HCT116 (cell line): ENCODE measurements at regions of chr4 and their contacts with region 1.

Region 1: DNA sequence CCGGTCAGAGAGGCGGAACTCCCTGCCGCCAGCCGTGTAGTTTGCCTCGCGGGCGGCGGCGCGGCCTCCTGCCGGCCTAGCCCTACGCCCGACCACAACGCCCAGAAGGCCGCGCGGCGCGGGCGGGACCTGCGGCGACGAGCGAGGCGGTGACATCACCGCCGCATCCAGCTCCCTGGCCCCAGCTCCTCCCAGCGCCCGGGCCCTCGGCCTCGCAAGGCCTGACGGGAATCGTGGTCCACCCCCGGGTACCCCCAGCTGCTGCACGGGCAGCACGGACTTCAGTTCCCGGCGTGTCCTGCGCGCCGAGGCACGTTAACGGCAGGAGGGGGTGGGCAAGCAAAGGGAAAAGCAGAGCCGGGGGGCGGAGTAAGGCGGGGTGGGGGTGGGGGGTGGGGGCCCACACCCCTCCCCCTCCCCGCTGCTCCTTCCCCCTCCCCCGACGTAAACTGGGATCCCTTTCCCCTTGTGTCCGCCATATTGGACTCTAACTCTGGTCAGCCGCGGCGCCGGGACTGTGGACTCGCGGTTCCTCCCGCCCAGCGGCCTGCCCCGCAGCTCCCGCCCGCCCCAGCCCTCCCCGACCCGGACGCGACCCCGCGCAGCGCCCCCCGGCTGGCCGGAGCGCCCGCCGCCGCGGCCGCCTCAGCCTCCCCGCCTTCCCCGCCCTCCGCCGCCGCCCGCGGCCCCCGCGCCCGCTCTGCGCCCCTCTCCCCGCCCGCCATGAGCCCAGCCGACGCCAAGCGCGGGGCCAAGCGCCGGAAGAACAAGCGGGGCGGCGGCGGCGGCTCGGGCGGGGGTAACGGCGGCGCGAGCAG is at the start of gene FAM193A:
- DNase-seq: peak; percentile 99
- ATAC-seq: peak; percentile 94
- H3K4me3 ChIP-seq: peak within 1 kb of the TSS; percentile 77 to 87
- H3K27ac ChIP-seq: peak within 1 kb of the TSS; percentile 97
- H3K4me1 ChIP-seq: peaks cover 8 to 26% of the 10 kb centered on the region in 2 experiments; a peak in 3 of 4 replicates
- H3K27me3 ChIP-seq: no peaks in the 10 kb centered on the region
- CTCF ChIP-seq: no peak
- POLR2A ChIP-seq: peak; percentile 71
- RAD21 ChIP-seq: no peak
- total RNA-seq, gene FAM193A: 15.7 TPM

Region 2: GRCh38 chr4:2468445-2469192 is 67.8 kb before region 1 on chr4 and contains the start of gene RNF4:
- CTCF ChIA-PET with region 1: no interaction called
- POLR2A ChIA-PET with region 1: no interaction called
- RAD21 ChIA-PET with region 1: no interaction called
- intact Hi-C with region 1: loop called (anchors 5 kb)
- DNase-seq: peak; percentile 91
- ATAC-seq: peak; percentile 89
- H3K4me3 ChIP-seq: peak within 1 kb of the TSS; percentile 80 to 94
- H3K27ac ChIP-seq: peak within 1 kb of the TSS; percentile 92
- H3K4me1 ChIP-seq: peaks cover 3 to 23% of the 10 kb centered on the region in 2 experiments; a peak in 3 of 4 replicates
- H3K27me3 ChIP-seq: no peaks in the 10 kb centered on the region
- CTCF ChIP-seq: no peak
- POLR2A ChIP-seq: peak; percentile 59
- RAD21 ChIP-seq: no peak
- total RNA-seq, gene RNF4: 62.3 TPM

Region 3: GRCh38 chr4:2755837-2756694 is 219.7 kb after region 1 on chr4 and contains the start of gene TNIP2:
- CTCF ChIA-PET with region 1: no interaction called
- POLR2A ChIA-PET with region 1: no interaction called
- RAD21 ChIA-PET with region 1: no interaction called
- intact Hi-C with region 1: no loop called
- DNase-seq: no peak
- ATAC-seq: peak; percentile 89
- H3K4me3 ChIP-seq: peak within 1 kb of the TSS; percentile 81 to 86
- H3K27ac ChIP-seq: peak within 1 kb of the TSS; percentile 98
- H3K4me1 ChIP-seq: peaks cover 17 to 22% of the 10 kb centered on the region in 2 experiments; a peak in 3 of 4 replicates
- H3K27me3 ChIP-seq: no peaks in the 10 kb centered on the region
- CTCF ChIP-seq: peak in 2 of 3 experiments; percentile 7 to 45; a peak in 2 of 6 replicates
- POLR2A ChIP-seq: no peak
- RAD21 ChIP-seq: no peak
- total RNA-seq, gene TNIP2: 41.0 TPM